CD4-positive, alpha-beta T cell (primary cell): ENCODE measurements at regions of chr3 and their contacts with region 1.

Region 1: DNA sequence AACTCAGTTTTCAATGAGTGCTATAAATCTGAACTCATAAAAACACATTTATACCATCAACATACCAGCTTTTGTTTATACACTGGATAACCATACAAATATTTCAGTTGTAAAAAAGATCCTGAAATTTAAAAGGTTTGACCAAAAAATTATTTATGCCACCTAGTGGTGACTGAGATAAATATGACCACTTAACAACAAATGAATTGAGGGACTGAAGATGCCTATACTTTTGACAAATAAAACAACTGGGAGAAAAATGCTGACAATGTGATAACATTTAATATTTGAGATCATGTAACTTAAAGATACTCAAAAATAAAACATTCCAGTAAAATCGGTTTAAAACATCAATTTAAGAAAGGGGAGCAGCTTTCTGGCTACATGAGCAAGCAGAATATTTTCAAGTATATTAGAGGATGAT is 30.4 kb downstream of the ATG3 start:
- DNase-seq: peak in 3 of 14 experiments; percentile 47 to 60 (median 55)
- ATAC-seq: no peak
- H3K4me3 ChIP-seq: no peak overlapping the region
- H3K4me3 Mint-ChIP-seq: no peak overlapping the region
- H3K27ac ChIP-seq: no peak overlapping the region
- H3K27ac Mint-ChIP-seq: peak overlapping the region; percentile 6
- H3K4me1 ChIP-seq: no peaks in the 10 kb centered on the region
- H3K4me1 Mint-ChIP-seq: no peaks in the 10 kb centered on the region
- H3K27me3 ChIP-seq: no peaks in the 10 kb centered on the region
- H3K27me3 Mint-ChIP-seq: no peaks in the 10 kb centered on the region
- CTCF ChIP-seq: peak; percentile 80

Region 2: GRCh38 chr3:112136959-112137693 is 394.2 kb before region 1 on chr3:
- CTCF ChIA-PET with region 1: no interaction called
- POLR2A ChIA-PET with region 1: no interaction called
- intact Hi-C with region 1: loop called in 1 of 2 experiments (anchors 2 kb)
- DNase-seq: peak in 11 of 14 experiments; percentile 19 to 75 (median 30)
- ATAC-seq: no peak
- H3K4me3 ChIP-seq: no peak overlapping the region
- H3K4me3 Mint-ChIP-seq: no peak overlapping the region
- H3K27ac ChIP-seq: no peak overlapping the region
- H3K27ac Mint-ChIP-seq: peak overlapping the region; percentile 27
- H3K4me1 ChIP-seq: peaks cover 36% of the 10 kb centered on the region
- H3K4me1 Mint-ChIP-seq: peaks cover 60% of the 10 kb centered on the region
- H3K27me3 ChIP-seq: no peaks in the 10 kb centered on the region
- H3K27me3 Mint-ChIP-seq: no peaks in the 10 kb centered on the region
- CTCF ChIP-seq: peak; percentile 68

Region 3: DNA sequence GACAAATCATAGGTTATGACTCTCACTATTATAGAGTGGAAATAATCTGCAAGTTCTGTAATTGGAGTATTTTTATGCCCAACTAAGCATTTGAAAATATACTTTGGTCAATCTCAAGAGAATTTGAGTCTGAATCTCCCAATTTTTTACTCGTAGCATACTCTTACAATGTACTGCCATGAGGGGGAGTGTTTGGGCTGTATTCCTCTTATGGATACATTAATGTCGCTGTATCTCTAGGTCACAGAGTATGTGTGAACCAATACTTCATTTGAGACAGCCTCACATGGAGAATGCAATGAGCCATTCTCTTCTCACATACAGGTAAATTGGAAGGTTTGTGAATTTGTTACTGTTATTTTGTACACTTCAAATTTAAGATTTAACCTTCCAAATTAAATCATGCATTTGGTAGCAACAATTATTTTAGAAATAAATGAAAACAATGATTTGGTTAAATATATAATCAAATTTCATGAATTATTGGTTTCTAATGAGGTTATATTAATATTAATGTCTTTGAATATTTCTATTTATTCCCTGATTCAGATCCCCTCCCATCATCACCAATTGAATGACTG is 203.9 kb before region 1 on chr3:
- CTCF ChIA-PET with region 1: no interaction called
- POLR2A ChIA-PET with region 1: no interaction called
- intact Hi-C with region 1: loop called in 1 of 2 experiments (anchors 5 kb)
- DNase-seq: peak in 8 of 14 experiments; percentile 17 to 81 (median 43)
- ATAC-seq: peak; percentile 100
- H3K4me3 ChIP-seq: no peak overlapping the region
- H3K4me3 Mint-ChIP-seq: no peak overlapping the region
- H3K27ac ChIP-seq: no peak overlapping the region
- H3K27ac Mint-ChIP-seq: no peak overlapping the region
- H3K4me1 ChIP-seq: peaks cover 2% of the 10 kb centered on the region
- H3K4me1 Mint-ChIP-seq: peaks cover 5% of the 10 kb centered on the region
- H3K27me3 ChIP-seq: no peaks in the 10 kb centered on the region
- H3K27me3 Mint-ChIP-seq: peaks cover 8% of the 10 kb centered on the region
- CTCF ChIP-seq: peak; percentile 77

Region 4: DNA sequence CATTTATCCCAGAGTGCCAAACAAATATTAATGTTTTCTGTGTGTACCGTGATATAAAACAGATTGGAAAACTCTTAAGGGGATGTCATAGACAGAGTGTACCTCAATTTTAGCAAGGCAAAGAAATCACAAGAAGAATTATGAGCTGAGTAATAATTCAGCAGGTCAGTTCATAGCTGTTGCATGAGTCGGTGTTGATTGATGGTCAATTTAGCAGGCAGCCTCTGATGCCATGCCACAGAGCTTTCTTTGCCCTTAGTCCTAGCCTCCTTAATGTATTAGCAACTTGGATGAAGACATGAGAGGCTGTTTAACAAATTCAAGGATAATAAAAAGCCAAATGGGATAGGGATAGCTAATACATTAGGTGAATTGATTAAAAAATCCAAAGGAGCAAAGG is 37.3 kb after region 1 on chr3:
- CTCF ChIA-PET with region 1: no interaction called
- POLR2A ChIA-PET with region 1: no interaction called
- intact Hi-C with region 1: no loop called
- DNase-seq: no peak
- ATAC-seq: no peak
- H3K4me3 ChIP-seq: no peak overlapping the region
- H3K4me3 Mint-ChIP-seq: no peak overlapping the region
- H3K27ac ChIP-seq: no peak overlapping the region
- H3K27ac Mint-ChIP-seq: no peak overlapping the region
- H3K4me1 ChIP-seq: no peaks in the 10 kb centered on the region
- H3K4me1 Mint-ChIP-seq: peaks cover 36% of the 10 kb centered on the region
- H3K27me3 ChIP-seq: no peaks in the 10 kb centered on the region
- H3K27me3 Mint-ChIP-seq: no peaks in the 10 kb centered on the region
- CTCF ChIP-seq: no peak